ENCODE measurements at regions of chr21 and their contacts with region 1.

Region 1: DNA sequence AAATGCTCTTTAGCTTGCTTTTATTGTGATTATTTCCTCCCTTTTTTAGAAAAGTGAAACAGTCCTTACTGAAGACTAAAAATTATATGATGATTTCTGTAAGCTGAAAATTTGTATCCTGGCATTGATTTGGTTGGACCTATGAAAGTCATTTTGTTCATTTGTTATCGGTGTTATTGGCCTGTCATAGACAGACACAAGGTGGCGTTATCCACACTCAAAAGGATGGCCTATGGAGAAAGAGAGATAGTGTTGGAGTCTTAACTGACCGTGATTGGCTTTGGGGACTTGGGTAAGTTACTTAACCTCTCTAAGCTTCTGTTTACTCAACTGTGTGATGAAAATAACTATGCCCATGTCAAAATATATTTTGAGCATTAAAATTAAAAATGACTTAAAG is 203.6 kb upstream of the CHODL start:
- DNase-seq: peak; percentile 4
- H3K4me3 ChIP-seq: peak overlapping the region in 1 of 2 experiments; percentile 39; a peak in 1 of 4 replicates
- H3K27ac ChIP-seq: no peak overlapping the region
- H3K4me1 ChIP-seq: no peaks in the 10 kb centered on the region
- H3K27me3 ChIP-seq: no peaks in the 10 kb centered on the region
- CTCF ChIP-seq: peak; percentile 60
- EP300 ChIP-seq: no peak
- RAD21 ChIP-seq: peak; percentile 74

Region 2: GRCh38 chr21:17964716-17965115 is 76.3 kb before region 1 on chr21:
- CTCF ChIA-PET with region 1: no interaction called
- POLR2A ChIA-PET with region 1: no interaction called
- DNase-seq: no peak
- H3K4me3 ChIP-seq: no peak overlapping the region
- H3K27ac ChIP-seq: no peak overlapping the region
- H3K4me1 ChIP-seq: no peaks in the 10 kb centered on the region
- H3K27me3 ChIP-seq: no peaks in the 10 kb centered on the region
- CTCF ChIP-seq: no peak
- EP300 ChIP-seq: no peak
- RAD21 ChIP-seq: no peak

Region 3: GRCh38 chr21:18023157-18023556 is 17.9 kb before region 1 on chr21:
- CTCF ChIA-PET with region 1: interaction called, 38 read pairs
- POLR2A ChIA-PET with region 1: no interaction called
- DNase-seq: no peak
- H3K4me3 ChIP-seq: no peak overlapping the region
- H3K27ac ChIP-seq: no peak overlapping the region
- H3K4me1 ChIP-seq: no peaks in the 10 kb centered on the region
- H3K27me3 ChIP-seq: no peaks in the 10 kb centered on the region
- CTCF ChIP-seq: no peak
- EP300 ChIP-seq: no peak
- RAD21 ChIP-seq: no peak

Region 4: GRCh38 chr21:18030248-18030647 is 10.8 kb before region 1 on chr21:
- CTCF ChIA-PET with region 1: interaction called, 38 read pairs
- POLR2A ChIA-PET with region 1: no interaction called
- DNase-seq: no peak
- H3K4me3 ChIP-seq: no peak overlapping the region
- H3K27ac ChIP-seq: no peak overlapping the region
- H3K4me1 ChIP-seq: no peaks in the 10 kb centered on the region
- H3K27me3 ChIP-seq: no peaks in the 10 kb centered on the region
- CTCF ChIP-seq: no peak
- EP300 ChIP-seq: no peak
- RAD21 ChIP-seq: no peak

Region 5: GRCh38 chr21:18053151-18053550 is 12.1 kb after region 1 on chr21:
- CTCF ChIA-PET with region 1: interaction called, 13 read pairs
- POLR2A ChIA-PET with region 1: no interaction called
- DNase-seq: no peak
- H3K4me3 ChIP-seq: no peak overlapping the region
- H3K27ac ChIP-seq: no peak overlapping the region
- H3K4me1 ChIP-seq: no peaks in the 10 kb centered on the region
- H3K27me3 ChIP-seq: no peaks in the 10 kb centered on the region
- CTCF ChIP-seq: no peak
- EP300 ChIP-seq: no peak
- RAD21 ChIP-seq: no peak

Region 6: GRCh38 chr21:18058731-18059398 is 17.9 kb after region 1 on chr21:
- CTCF ChIA-PET with region 1: interaction called, 13 read pairs
- POLR2A ChIA-PET with region 1: no interaction called
- DNase-seq: peak; percentile 0
- H3K4me3 ChIP-seq: no peak overlapping the region
- H3K27ac ChIP-seq: no peak overlapping the region
- H3K4me1 ChIP-seq: no peaks in the 10 kb centered on the region; a peak in 1 of 4 replicates
- H3K27me3 ChIP-seq: no peaks in the 10 kb centered on the region
- CTCF ChIP-seq: no peak
- EP300 ChIP-seq: no peak
- RAD21 ChIP-seq: no peak

Region 7: GRCh38 chr21:18070392-18070791 is 29.4 kb after region 1 on chr21:
- CTCF ChIA-PET with region 1: interaction called, 10 read pairs
- POLR2A ChIA-PET with region 1: no interaction called
- DNase-seq: no peak
- H3K4me3 ChIP-seq: no peak overlapping the region
- H3K27ac ChIP-seq: no peak overlapping the region
- H3K4me1 ChIP-seq: no peaks in the 10 kb centered on the region; a peak in 1 of 4 replicates
- H3K27me3 ChIP-seq: no peaks in the 10 kb centered on the region
- CTCF ChIP-seq: no peak
- EP300 ChIP-seq: no peak
- RAD21 ChIP-seq: no peak

Region 8: DNA sequence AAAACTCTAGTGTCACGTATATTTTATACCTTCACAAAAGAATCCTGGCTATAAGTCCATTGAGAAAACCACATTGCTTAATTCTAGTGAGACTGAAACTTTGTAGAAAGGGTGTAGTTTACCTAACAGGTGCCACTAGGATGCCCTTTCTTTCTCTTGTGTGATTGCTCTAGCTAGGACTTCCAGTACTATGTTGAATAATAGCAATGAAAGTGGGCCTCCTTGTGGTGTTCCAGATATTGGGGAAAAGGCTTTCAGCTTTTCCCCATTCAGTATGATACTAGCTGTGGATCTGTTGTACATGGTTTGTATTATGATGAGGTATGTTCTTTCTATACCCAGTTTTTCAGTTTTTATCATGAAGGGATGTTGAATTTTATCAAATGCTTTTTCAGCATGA is 163.9 kb after region 1 on chr21:
- CTCF ChIA-PET with region 1: interaction called, 12 read pairs
- POLR2A ChIA-PET with region 1: no interaction called
- DNase-seq: no peak
- H3K4me3 ChIP-seq: no peak overlapping the region
- H3K27ac ChIP-seq: no peak overlapping the region
- H3K4me1 ChIP-seq: no peaks in the 10 kb centered on the region
- H3K27me3 ChIP-seq: no peaks in the 10 kb centered on the region
- CTCF ChIP-seq: no peak
- EP300 ChIP-seq: no peak
- RAD21 ChIP-seq: 0 out of 2 replicates have a peak, but pooled peaks have one; percentile 7

Measured in SK-N-SH (cell line).